CD4-positive, alpha-beta T cell (primary cell): ENCODE measurements at regions of chr15 and their contacts with region 1.

Region 1: GRCh38 chr15:29090617-29091466 is 178.8 kb downstream of the NSMCE3 start:
- DNase-seq: peak in 13 of 14 experiments; percentile 24 to 68 (median 41)
- ATAC-seq: peak; percentile 76
- H3K4me3 ChIP-seq: no peak overlapping the region
- H3K4me3 Mint-ChIP-seq: peak overlapping the region; percentile 30
- H3K27ac ChIP-seq: peak overlapping the region in 1 of 2 donors; percentile 25
- H3K27ac Mint-ChIP-seq: peak overlapping the region; percentile 81
- H3K4me1 ChIP-seq: peaks cover 36% of the 10 kb centered on the region
- H3K4me1 Mint-ChIP-seq: peaks cover 42% of the 10 kb centered on the region
- H3K27me3 ChIP-seq: no peaks in the 10 kb centered on the region
- H3K27me3 Mint-ChIP-seq: no peaks in the 10 kb centered on the region
- CTCF ChIP-seq: peak; percentile 81

Region 2: GRCh38 chr15:28786521-28786920 is 304.3 kb before region 1 on chr15:
- CTCF ChIA-PET with region 1: no interaction called
- POLR2A ChIA-PET with region 1: no interaction called
- intact Hi-C with region 1: loop called in 1 of 2 experiments (anchors 10 kb)
- DNase-seq: no peak
- ATAC-seq: no peak
- H3K4me3 ChIP-seq: no peak overlapping the region
- H3K4me3 Mint-ChIP-seq: no peak overlapping the region
- H3K27ac ChIP-seq: no peak overlapping the region
- H3K27ac Mint-ChIP-seq: no peak overlapping the region
- H3K4me1 ChIP-seq: no peaks in the 10 kb centered on the region
- H3K4me1 Mint-ChIP-seq: peaks cover 6% of the 10 kb centered on the region
- H3K27me3 ChIP-seq: peaks cover 0 to 4% of the 10 kb centered on the region in 2 experiments
- H3K27me3 Mint-ChIP-seq: peaks cover 20% of the 10 kb centered on the region
- CTCF ChIP-seq: no peak

Region 3: DNA sequence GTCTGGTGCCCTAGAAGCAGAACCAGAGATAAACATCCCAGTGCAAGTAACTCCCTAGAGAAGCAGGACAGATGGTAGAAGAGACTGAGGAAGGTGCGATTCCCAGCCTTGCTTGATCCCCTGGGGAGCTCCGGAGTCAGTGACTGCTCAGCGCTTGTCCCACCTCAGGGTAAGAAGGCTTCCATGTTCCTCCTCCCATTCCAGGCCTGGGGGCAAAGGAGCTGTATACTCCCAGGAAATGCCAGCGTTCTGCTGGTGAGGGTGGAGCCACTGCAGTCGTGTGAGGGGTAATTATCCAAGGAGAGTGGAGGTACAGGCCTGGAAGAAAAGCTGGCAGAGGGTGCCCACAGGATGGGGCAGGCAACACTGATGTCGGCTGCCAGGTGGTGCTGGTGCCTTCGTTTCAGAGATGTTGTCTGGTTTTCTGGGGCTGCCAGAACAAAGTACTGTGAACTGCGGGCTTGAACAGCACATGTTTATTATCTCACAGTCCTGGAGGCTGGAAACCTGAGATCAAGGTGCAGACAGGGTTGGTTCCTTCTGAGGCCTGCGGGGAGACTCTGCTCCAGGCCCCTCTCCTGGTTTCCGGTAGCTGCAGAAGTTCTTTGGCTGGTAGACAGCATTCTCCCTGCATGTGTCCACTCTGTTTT is 217.2 kb before region 1 on chr15:
- CTCF ChIA-PET with region 1: interaction called, 6 read pairs
- POLR2A ChIA-PET with region 1: no interaction called
- intact Hi-C with region 1: loop called (anchors 1 to 2 kb)
- DNase-seq: peak in 13 of 14 experiments; percentile 24 to 70 (median 39)
- ATAC-seq: peak; percentile 89
- H3K4me3 ChIP-seq: no peak overlapping the region
- H3K4me3 Mint-ChIP-seq: no peak overlapping the region
- H3K27ac ChIP-seq: no peak overlapping the region
- H3K27ac Mint-ChIP-seq: no peak overlapping the region
- H3K4me1 ChIP-seq: peaks cover 19% of the 10 kb centered on the region
- H3K4me1 Mint-ChIP-seq: peaks cover 23% of the 10 kb centered on the region
- H3K27me3 ChIP-seq: no peaks in the 10 kb centered on the region
- H3K27me3 Mint-ChIP-seq: no peaks in the 10 kb centered on the region
- CTCF ChIP-seq: peak; percentile 42

Region 4: DNA sequence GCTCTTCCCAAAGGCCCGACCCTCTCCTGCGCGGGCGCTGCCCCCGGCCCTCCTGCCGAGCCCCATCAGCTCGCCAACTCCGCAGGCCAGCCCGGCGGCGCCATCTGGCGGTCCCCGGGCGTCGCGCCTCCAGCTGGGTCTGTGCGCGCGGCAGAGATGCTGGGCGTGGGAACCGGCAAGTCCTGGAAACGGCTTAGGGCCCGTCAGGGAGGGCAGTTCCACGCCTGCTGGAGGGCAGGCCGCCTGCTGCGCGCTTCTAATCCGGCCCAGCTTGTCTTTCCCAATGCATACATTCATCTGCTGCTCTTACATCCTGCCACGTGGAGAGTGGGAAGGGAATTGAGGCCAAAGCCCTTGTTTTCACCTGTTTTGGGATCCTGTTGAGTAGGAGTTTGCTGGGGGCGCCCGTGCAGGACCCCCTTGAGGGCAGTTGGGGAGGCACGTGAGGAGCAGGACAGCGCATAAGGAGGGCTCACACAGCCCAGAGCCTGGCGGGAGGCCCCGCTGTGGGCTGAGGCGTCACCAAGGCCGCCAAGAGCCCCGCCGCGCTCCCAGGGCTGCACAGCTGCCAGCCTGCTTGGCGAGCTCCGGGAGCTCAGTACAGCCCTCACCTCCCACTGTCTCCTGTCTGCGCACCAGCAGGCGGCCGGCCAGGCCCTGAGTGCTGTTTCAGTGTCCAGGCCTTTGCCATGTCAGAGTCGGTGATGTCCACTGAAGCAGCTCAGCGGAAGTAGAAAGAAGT is 13.2 kb after region 1 on chr15:
- CTCF ChIA-PET with region 1: interaction called, 15 read pairs
- POLR2A ChIA-PET with region 1: interaction called, 3 read pairs
- intact Hi-C with region 1: no loop called
- DNase-seq: peak; percentile 25 to 70 (median 46)
- ATAC-seq: peak; percentile 72
- H3K4me3 ChIP-seq: no peak overlapping the region
- H3K4me3 Mint-ChIP-seq: no peak overlapping the region
- H3K27ac ChIP-seq: no peak overlapping the region
- H3K27ac Mint-ChIP-seq: no peak overlapping the region
- H3K4me1 ChIP-seq: peaks cover 3% of the 10 kb centered on the region
- H3K4me1 Mint-ChIP-seq: peaks cover 11% of the 10 kb centered on the region
- H3K27me3 ChIP-seq: no peaks in the 10 kb centered on the region
- H3K27me3 Mint-ChIP-seq: no peaks in the 10 kb centered on the region
- CTCF ChIP-seq: peak; percentile 69